Naive thymus-derived CD4-positive, alpha-beta T cell (primary cell): ENCODE measurements at regions of chr12 and their contacts with region 1.

Region 1: GRCh38 chr12:131894313-131894860 is at the start of gene ULK1:
- DNase-seq: peak; percentile 85 to 97 (median 92)
- ATAC-seq: peak; percentile 88
- H3K4me3 ChIP-seq: peak within 1 kb of the TSS; percentile 71
- H3K4me3 Mint-ChIP-seq: peak within 1 kb of the TSS; percentile 86 to 94 (median 92)
- H3K27ac ChIP-seq: peak within 1 kb of the TSS; percentile 83
- H3K27ac Mint-ChIP-seq: peak within 1 kb of the TSS; percentile 68 to 94 (median 85)
- H3K4me1 ChIP-seq: peaks cover 0 to 12% of the 10 kb centered on the region in 2 donors
- H3K4me1 Mint-ChIP-seq: peaks cover 10 to 29% (median 22%) of the 10 kb centered on the region in 7 donors
- H3K27me3 ChIP-seq: no peaks in the 10 kb centered on the region
- H3K27me3 Mint-ChIP-seq: no peaks in the 10 kb centered on the region
- total RNA-seq, gene ULK1: 33.9 to 109 (median 43.8) TPM

Region 2: DNA sequence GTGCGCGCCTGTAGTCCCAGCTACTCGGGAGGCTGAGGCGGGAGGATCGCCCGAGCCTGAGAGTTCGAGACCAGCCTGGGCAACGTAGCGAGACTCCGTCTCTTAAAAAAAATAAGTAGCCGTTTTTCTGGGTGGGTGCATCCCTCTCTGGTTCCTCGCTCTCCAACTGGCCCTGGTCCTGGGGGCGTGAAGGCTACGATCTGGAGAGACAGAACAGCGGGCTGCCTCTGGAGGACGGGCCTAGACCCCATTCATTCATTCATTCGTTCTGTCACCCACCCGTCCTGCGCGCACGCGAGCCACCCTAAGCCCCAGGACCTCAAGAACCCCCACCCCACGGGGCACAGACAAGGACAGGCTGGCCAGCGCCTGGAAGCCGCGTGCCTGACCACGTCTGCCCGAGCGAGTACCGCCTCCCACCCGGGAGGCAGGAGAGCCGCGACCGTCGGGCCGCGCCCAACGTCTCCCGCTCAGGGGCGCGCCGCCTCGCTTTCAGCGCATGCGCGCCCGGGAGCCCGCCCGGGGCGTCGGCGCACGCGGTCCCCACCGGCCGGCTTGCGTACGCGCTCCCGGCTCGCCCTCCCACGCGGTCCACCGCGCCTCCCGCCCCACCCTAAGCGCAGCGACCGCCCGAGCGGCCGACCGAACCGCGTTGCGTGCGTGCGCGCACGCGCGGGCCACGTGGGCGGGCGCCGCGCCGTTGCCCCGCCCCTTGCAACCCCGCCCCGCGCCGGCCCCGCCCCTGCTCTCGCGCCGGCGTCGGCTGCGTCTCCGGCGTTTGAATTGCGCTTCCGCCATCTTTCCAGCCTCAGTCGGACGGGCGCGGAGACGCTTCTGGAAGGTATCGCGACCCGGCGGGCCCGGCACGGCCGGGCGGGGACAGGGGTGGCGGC is 1022.9 kb before region 1 on chr12 and contains the start of gene RAN:
- CTCF ChIA-PET with region 1: no interaction called
- POLR2A ChIA-PET with region 1: no interaction called
- intact Hi-C with region 1: loop called (anchors 10 kb)
- DNase-seq: peak; percentile 86 to 93 (median 90)
- ATAC-seq: peak; percentile 92
- H3K4me3 ChIP-seq: peak within 1 kb of the TSS; percentile 68
- H3K4me3 Mint-ChIP-seq: peak within 1 kb of the TSS; percentile 85 to 98 (median 91)
- H3K27ac ChIP-seq: peak within 1 kb of the TSS; percentile 90
- H3K27ac Mint-ChIP-seq: peak within 1 kb of the TSS; percentile 86 to 98 (median 95)
- H3K4me1 ChIP-seq: peaks cover 46 to 52% of the 10 kb centered on the region in 2 donors
- H3K4me1 Mint-ChIP-seq: peaks cover 29 to 83% (median 61%) of the 10 kb centered on the region in 7 donors
- H3K27me3 ChIP-seq: no peaks in the 10 kb centered on the region
- H3K27me3 Mint-ChIP-seq: no peaks in the 10 kb centered on the region
- total RNA-seq, gene RAN: 255 to 925 (median 269) TPM

Region 3: DNA sequence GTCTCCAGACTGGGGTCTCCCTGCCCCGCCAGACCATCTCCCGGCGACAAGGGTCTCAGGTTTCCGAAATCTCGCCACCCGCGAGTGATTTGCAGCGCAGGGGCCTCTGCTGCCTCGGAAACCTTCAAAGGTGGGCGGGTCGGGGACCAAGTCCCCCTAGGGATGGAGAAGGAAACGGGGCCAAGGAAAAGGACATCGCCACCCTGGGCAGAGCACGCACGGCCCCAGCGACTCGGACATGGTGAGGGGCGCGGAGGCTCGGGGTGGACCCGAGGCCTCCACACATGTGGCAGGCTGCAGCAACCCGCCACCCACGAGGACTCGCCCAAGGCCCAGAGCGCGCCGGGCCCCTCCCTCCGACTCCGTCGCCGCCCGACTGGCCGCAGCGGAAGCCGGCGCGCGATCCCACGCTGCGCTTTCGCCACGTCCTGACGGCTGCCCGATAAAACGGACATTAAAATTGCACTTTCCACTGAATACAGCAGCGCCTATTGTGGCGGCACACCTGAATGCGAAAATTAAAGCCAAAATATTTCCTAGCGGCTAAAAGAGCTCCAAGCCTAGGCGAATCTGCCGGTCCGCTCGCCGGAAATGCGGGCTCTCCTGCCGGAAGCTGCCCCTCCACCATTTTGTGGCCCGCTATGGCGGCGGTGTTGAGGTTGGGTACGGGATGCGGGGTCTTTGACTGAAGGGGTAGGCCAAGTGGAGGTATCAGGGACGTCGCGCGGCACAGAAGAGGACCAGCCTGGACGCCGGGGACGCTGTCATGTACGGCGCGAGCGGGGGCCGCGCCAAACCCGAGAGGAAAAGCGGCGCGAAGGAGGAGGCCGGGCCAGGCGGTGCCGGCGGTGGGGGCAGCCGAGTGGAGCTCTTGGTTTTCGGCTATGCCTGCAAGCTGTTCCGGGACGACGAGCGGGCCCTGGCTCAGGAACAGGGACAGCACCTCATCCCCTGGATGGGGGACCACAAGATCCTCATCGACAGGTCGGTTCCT is 183.6 kb before region 1 on chr12 and contains the start of gene SFSWAP:
- CTCF ChIA-PET with region 1: no interaction called
- POLR2A ChIA-PET with region 1: interaction called, 5 read pairs
- intact Hi-C with region 1: loop called (anchors 2 to 10 kb)
- DNase-seq: peak; percentile 63 to 81 (median 79)
- ATAC-seq: peak; percentile 92
- H3K4me3 ChIP-seq: peak within 1 kb of the TSS; percentile 84
- H3K4me3 Mint-ChIP-seq: peak within 1 kb of the TSS; percentile 93 to 99 (median 96)
- H3K27ac ChIP-seq: peak within 1 kb of the TSS; percentile 87
- H3K27ac Mint-ChIP-seq: peak within 1 kb of the TSS; percentile 90 to 99 (median 97)
- H3K4me1 ChIP-seq: peaks cover 18 to 19% of the 10 kb centered on the region in 2 donors
- H3K4me1 Mint-ChIP-seq: peaks cover 15 to 40% (median 28%) of the 10 kb centered on the region in 7 donors
- H3K27me3 ChIP-seq: no peaks in the 10 kb centered on the region
- H3K27me3 Mint-ChIP-seq: no peaks in the 10 kb centered on the region
- total RNA-seq, gene SFSWAP: 65.6 to 120 (median 98.4) TPM

Region 4: GRCh38 chr12:131882779-131883520 is 11.4 kb before region 1 on chr12:
- CTCF ChIA-PET with region 1: no interaction called
- POLR2A ChIA-PET with region 1: no interaction called
- intact Hi-C with region 1: no loop called
- DNase-seq: no peak
- ATAC-seq: peak; percentile 61
- H3K4me3 ChIP-seq: no peak overlapping the region
- H3K4me3 Mint-ChIP-seq: no peak overlapping the region
- H3K27ac ChIP-seq: no peak overlapping the region
- H3K27ac Mint-ChIP-seq: no peak overlapping the region
- H3K4me1 ChIP-seq: no peaks in the 10 kb centered on the region
- H3K4me1 Mint-ChIP-seq: peaks cover 0 to 15% (median 0%) of the 10 kb centered on the region in 7 donors
- H3K27me3 ChIP-seq: no peaks in the 10 kb centered on the region
- H3K27me3 Mint-ChIP-seq: peaks cover 0 to 4% (median 0%) of the 10 kb centered on the region in 5 donors

Region 5: GRCh38 chr12:131928711-131929580 is 34.6 kb after region 1 on chr12 and contains the start of gene PUS1:
- CTCF ChIA-PET with region 1: no interaction called
- POLR2A ChIA-PET with region 1: interaction called, 7 read pairs
- intact Hi-C with region 1: loop called (anchors 1 kb)
- DNase-seq: peak; percentile 84 to 95 (median 93)
- ATAC-seq: peak; percentile 95
- H3K4me3 ChIP-seq: peak within 1 kb of the TSS; percentile 75
- H3K4me3 Mint-ChIP-seq: peak within 1 kb of the TSS; percentile 87 to 100 (median 92)
- H3K27ac ChIP-seq: peak within 1 kb of the TSS; percentile 89
- H3K27ac Mint-ChIP-seq: peak within 1 kb of the TSS; percentile 79 to 97 (median 88)
- H3K4me1 ChIP-seq: no peaks in the 10 kb centered on the region
- H3K4me1 Mint-ChIP-seq: peaks cover 13 to 28% (median 25%) of the 10 kb centered on the region in 7 donors
- H3K27me3 ChIP-seq: no peaks in the 10 kb centered on the region
- H3K27me3 Mint-ChIP-seq: no peaks in the 10 kb centered on the region
- total RNA-seq, gene PUS1: 23.4 to 54.9 (median 49.2) TPM

Region 6: DNA sequence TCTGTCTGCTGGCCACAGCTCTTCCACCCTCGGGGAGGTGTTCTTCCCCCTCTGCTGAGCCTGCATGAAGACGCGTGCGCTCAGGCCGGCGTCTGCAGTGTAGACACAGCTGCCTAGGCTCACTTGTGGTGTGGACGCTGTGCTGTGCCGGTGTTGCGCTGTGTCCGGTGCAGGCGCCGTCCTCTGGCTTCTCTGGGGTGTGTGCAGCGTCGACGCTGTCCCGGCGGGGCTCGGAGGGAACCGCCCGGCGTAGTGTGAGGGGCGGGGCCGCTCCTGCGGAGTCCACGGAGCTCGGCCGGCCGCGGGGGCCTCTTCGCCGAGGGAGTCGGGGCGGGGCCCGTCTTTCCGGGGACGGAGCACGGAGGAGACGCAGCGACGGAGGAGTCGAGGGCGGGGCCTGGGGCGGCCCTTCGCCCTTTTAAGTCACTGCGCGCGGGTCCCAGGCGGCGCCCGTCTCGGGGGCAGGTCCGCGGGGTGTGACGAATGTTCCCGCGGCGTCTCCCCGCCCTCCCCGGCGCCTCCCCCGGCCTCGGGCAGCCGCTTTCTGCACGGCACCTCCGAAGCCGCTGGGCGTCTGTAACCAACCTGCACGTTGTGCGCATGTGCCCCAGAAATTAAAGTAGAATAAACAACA is 295.1 kb after region 1 on chr12:
- CTCF ChIA-PET with region 1: no interaction called
- POLR2A ChIA-PET with region 1: no interaction called
- intact Hi-C with region 1: loop called in 1 of 2 experiments (anchors 2 kb)
- DNase-seq: peak; percentile 86 to 95 (median 93)
- ATAC-seq: peak; percentile 93
- H3K4me3 ChIP-seq: peak overlapping the region; percentile 71
- H3K4me3 Mint-ChIP-seq: peak overlapping the region; percentile 80 to 99 (median 96)
- H3K27ac ChIP-seq: peak overlapping the region; percentile 82
- H3K27ac Mint-ChIP-seq: peak overlapping the region; percentile 86 to 99 (median 96)
- H3K4me1 ChIP-seq: peaks cover 20 to 39% of the 10 kb centered on the region in 2 donors
- H3K4me1 Mint-ChIP-seq: peaks cover 15 to 55% (median 40%) of the 10 kb centered on the region in 7 donors
- H3K27me3 ChIP-seq: no peaks in the 10 kb centered on the region
- H3K27me3 Mint-ChIP-seq: peaks cover 0 to 7% (median 0%) of the 10 kb centered on the region in 5 donors